AG04450 (cell line): ENCODE measurements at regions of chr5 and their contacts with region 1.

Region 1: DNA sequence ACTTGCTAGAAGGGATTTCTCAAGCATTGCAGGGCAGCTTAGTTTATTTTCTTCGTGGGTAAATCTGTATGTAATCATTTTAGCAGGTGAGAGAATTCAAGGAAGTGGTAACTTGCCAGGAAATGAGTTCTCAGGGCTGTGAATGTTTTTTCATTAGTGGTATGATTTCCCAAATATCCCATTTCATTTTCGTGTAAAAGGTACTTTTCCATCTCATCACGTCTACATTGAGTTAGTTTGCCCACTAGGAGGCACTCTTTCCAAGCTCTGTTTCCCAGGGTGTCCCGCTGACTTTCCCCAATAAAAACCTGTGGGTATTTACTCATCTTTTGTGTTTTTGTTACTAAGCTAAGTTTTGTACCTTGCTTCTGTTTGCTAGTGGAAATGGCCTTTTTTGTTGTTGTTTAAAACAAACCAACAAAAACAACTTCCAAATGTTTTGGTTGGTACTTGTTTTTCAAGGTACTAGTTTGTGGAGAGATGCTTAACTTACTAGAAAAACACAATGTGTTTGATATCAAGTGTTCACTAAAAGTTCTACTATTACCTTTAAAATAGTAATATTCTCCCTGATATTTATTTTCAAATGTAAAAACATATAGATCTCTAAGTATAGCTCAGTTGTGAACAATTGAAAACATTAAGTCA is 373.6 kb downstream of the ADGRV1 start:
- DNase-seq: peak; percentile 26
- H3K4me3 ChIP-seq: no peak overlapping the region
- H3K27ac ChIP-seq: no peak overlapping the region
- H3K27me3 ChIP-seq: no peaks in the 10 kb centered on the region
- CTCF ChIP-seq: peak; percentile 88

Region 2: GRCh38 chr5:90740244-90740799 is 191.9 kb before region 1 on chr5:
- CTCF ChIA-PET with region 1: no interaction called
- POLR2A ChIA-PET with region 1: no interaction called
- DNase-seq: no peak
- H3K4me3 ChIP-seq: no peak overlapping the region
- H3K27ac ChIP-seq: no peak overlapping the region
- H3K27me3 ChIP-seq: no peaks in the 10 kb centered on the region
- CTCF ChIP-seq: no peak

Region 3: DNA sequence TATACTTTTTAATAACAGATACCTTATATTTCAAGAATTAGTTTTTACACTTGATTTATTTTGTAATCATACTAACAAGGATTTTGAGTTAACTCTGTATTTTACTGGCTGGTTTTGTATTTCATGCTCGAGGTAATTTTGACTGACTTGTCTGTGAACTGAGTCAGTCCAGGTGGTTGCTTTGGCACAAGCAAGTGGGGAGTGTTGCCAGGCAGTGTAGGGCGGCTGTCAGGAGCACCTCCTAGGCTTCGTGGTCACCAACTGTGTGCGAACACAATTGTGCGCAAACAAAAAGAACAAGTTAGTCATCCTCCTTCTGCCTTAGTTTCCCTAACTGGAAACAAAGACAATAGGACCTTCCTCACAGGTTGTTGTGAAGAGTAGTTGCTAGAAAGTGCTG is 87.2 kb before region 1 on chr5:
- CTCF ChIA-PET with region 1: no interaction called
- POLR2A ChIA-PET with region 1: no interaction called
- DNase-seq: no peak
- H3K4me3 ChIP-seq: no peak overlapping the region
- H3K27ac ChIP-seq: no peak overlapping the region
- H3K27me3 ChIP-seq: no peaks in the 10 kb centered on the region
- CTCF ChIP-seq: no peak

Region 4: GRCh38 chr5:90866333-90866732 is 65.8 kb before region 1 on chr5:
- CTCF ChIA-PET with region 1: interaction called, 25 read pairs
- POLR2A ChIA-PET with region 1: no interaction called
- DNase-seq: no peak
- H3K4me3 ChIP-seq: no peak overlapping the region
- H3K27ac ChIP-seq: no peak overlapping the region
- H3K27me3 ChIP-seq: no peaks in the 10 kb centered on the region
- CTCF ChIP-seq: peak; percentile 45

Region 5: DNA sequence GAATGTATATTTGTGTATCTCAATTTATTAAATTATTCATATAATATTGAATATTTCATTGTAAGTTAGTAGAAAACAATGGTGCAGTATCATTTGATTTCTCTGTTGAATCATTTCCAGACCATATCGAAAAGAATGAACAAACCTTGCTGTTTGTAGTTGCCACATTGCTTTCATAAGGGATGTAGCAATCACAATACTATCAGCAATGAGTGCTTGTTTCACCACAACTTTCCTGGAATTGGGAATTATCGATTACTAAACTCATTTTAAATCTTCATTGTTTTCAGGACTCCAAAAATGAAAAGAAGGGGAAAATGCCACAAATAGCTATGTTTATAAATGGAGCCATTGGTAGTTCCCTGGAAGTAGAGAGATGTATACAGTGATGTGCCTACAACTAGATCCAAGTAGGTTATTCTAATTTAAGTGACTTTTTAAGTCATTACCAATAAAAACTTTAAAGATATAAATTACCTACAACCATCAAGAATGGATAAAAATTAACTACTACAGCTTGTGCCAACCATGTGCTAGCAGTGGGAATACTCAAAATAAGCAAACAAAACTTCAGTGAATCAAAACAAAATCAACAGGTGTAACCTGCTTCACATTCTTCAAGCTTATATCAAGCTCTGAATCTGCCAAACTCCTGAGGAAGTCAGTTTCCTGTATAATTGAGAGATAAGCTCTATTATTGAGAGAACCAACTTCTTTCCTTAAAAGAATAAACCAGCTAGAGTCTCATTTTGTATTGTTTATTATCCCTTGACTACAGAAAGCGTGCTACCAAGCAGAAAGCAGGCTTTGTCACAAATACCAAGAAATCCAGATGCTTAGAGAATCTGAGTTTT is 15.0 kb before region 1 on chr5:
- CTCF ChIA-PET with region 1: interaction called, 21 read pairs
- POLR2A ChIA-PET with region 1: no interaction called
- DNase-seq: no peak
- H3K4me3 ChIP-seq: no peak overlapping the region
- H3K27ac ChIP-seq: no peak overlapping the region
- H3K27me3 ChIP-seq: no peaks in the 10 kb centered on the region
- CTCF ChIP-seq: no peak

Region 6: GRCh38 chr5:90985341-90985740 is 53.2 kb after region 1 on chr5:
- CTCF ChIA-PET with region 1: interaction called, 11 read pairs
- POLR2A ChIA-PET with region 1: no interaction called
- DNase-seq: no peak
- H3K4me3 ChIP-seq: no peak overlapping the region
- H3K27ac ChIP-seq: no peak overlapping the region
- H3K27me3 ChIP-seq: no peaks in the 10 kb centered on the region
- CTCF ChIP-seq: no peak

Region 7: GRCh38 chr5:91016954-91017700 is 85.0 kb after region 1 on chr5:
- CTCF ChIA-PET with region 1: interaction called, 17 read pairs
- POLR2A ChIA-PET with region 1: no interaction called
- DNase-seq: peak; percentile 6
- H3K4me3 ChIP-seq: no peak overlapping the region
- H3K27ac ChIP-seq: no peak overlapping the region
- H3K27me3 ChIP-seq: no peaks in the 10 kb centered on the region
- CTCF ChIP-seq: no peak

Region 8: GRCh38 chr5:91101600-91102379 is 169.6 kb after region 1 on chr5:
- CTCF ChIA-PET with region 1: interaction called, 15 read pairs
- POLR2A ChIA-PET with region 1: no interaction called
- DNase-seq: peak; percentile 73
- H3K4me3 ChIP-seq: no peak overlapping the region
- H3K27ac ChIP-seq: no peak overlapping the region
- H3K27me3 ChIP-seq: no peaks in the 10 kb centered on the region
- CTCF ChIP-seq: peak; percentile 83

Region 9: DNA sequence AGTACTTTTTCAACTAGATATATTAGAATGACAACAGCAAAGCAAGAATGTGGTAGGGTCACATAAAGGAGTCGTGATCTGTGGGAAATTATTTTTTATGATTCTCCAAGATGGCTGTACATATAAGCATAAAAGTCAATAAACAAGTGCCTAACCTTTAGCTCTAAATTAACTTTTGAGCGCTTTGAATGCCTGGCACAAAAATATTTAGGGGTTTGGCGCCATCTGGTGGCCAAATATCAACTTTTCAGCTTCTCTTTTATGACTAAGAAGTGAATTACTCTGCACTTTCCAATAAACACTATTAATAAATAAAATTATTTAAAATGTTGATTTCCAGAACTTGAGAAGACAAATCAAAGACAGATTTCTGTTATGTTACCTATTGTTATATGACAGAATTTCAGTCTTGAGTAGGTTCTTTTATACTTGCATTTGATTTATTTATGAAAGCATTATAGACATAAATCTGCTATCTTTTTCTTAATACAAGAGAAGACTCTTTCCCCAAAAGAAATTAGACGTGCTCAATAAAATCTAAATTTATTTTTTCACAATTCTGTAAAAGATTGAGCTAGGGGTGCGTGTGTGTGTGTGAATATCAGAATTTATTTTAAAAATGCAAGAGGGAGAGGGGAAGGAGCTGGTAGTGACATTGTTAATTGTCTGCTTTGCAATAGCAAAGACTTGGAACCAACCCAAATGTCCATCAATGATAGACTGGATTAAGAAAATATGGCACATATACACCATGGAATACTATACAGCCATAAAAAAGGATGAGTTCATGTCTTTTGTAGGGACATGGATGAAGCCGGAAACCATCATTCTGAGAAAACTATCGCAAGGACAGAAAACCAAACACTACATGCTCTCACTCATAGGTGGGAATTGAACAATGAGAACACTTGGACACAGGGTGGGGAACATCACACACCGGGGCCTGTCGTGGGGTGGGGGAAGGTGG is 487.7 kb after region 1 on chr5:
- CTCF ChIA-PET with region 1: interaction called, 259 read pairs
- POLR2A ChIA-PET with region 1: no interaction called
- DNase-seq: peak; percentile 26
- H3K4me3 ChIP-seq: no peak overlapping the region
- H3K27ac ChIP-seq: no peak overlapping the region
- H3K27me3 ChIP-seq: no peaks in the 10 kb centered on the region
- CTCF ChIP-seq: peak; percentile 66